Caco-2 (cell line): ENCODE measurements at regions of chr20 and their contacts with region 1.

Region 1: DNA sequence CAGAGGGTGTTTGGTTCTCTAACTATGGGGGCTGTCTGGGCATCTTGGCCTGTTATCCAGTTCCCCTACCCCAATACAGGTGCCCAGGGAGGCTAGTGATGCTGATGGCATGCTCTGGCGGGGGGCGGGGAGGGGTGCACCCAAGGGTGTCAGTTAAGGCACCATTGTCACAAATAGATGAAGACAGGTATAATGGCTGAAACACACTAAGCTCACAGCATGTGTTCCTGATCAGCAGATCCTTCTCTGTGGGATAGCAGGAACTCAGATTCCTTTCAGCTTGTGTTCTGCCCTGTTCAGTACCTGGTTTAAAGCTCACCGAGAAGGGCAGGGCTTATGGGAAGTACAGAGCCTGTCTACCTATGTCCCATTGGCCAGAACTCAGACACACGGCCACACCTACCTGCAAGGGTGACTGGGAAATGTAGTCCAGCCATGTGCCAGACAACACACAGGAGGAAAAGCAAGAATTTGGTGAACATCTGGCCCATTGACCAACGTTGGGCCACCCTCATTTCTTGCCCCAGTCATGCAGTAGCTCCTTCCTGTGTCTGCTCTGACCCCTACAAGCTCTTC is 3.4 kb upstream of the RSPO4 start:
- DNase-seq: peak; percentile 64 to 79
- H3K4me3 ChIP-seq: no peak overlapping the region
- H3K4me3 Mint-ChIP-seq: no peak overlapping the region
- H3K27ac Mint-ChIP-seq: no peak overlapping the region
- H3K4me1 ChIP-seq: peaks cover 5% of the 10 kb centered on the region; the same call in 1 of the 2 replicates
- H3K4me1 Mint-ChIP-seq: peaks cover 16% of the 10 kb centered on the region
- H3K27me3 ChIP-seq: peaks cover 4% of the 10 kb centered on the region
- H3K27me3 Mint-ChIP-seq: peaks cover 19% of the 10 kb centered on the region
- CTCF ChIP-seq: no peak

Region 2: DNA sequence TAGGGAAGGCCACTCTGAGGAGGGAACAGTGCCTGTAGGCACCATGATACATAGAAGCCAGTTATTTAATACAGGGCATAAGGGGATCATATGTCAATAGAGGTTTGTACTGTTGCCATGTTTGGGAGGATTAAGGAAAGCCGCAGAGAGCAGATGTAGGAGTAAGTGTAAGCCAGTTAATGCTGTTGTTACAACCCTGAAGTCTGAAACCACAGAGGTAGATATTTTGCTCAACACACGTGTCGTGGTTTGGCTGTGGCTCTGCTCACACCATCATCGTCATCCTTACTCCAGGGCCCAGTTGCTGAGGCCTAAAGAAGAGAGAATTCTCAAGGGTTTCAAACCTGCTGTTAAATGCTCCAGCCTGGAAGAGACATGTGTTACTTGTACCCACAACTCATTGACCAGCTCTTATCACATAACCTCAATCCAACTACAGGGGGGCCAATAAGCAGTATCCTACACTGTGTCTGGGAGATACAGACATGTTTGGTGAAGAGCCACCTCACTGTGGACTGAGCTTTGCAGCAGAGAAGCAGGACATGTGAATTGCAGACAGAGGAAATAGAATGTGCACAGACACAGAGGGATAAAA is 81.9 kb after region 1 on chr20:
- CTCF ChIA-PET with region 1: no interaction called
- POLR2A ChIA-PET with region 1: no interaction called
- intact Hi-C with region 1: no loop called
- DNase-seq: no peak
- H3K4me3 ChIP-seq: no peak overlapping the region
- H3K4me3 Mint-ChIP-seq: no peak overlapping the region
- H3K27ac Mint-ChIP-seq: no peak overlapping the region
- H3K4me1 ChIP-seq: no peaks in the 10 kb centered on the region
- H3K4me1 Mint-ChIP-seq: no peaks in the 10 kb centered on the region
- H3K27me3 ChIP-seq: no peaks in the 10 kb centered on the region; the same call in 1 of the 2 replicates
- H3K27me3 Mint-ChIP-seq: no peaks in the 10 kb centered on the region
- CTCF ChIP-seq: no peak

Region 3: GRCh38 chr20:1108437-1108920 is 102.9 kb after region 1 on chr20:
- CTCF ChIA-PET with region 1: no interaction called
- POLR2A ChIA-PET with region 1: no interaction called
- intact Hi-C with region 1: loop called (anchors 10 kb)
- DNase-seq: peak; percentile 59 to 68
- H3K4me3 ChIP-seq: no peak overlapping the region
- H3K4me3 Mint-ChIP-seq: no peak overlapping the region
- H3K27ac Mint-ChIP-seq: no peak overlapping the region
- H3K4me1 ChIP-seq: no peaks in the 10 kb centered on the region
- H3K4me1 Mint-ChIP-seq: no peaks in the 10 kb centered on the region
- H3K27me3 ChIP-seq: no peaks in the 10 kb centered on the region
- H3K27me3 Mint-ChIP-seq: peaks cover 11% of the 10 kb centered on the region
- CTCF ChIP-seq: peak; percentile 86

Region 4: GRCh38 chr20:1357921-1358671 is 352.6 kb after region 1 on chr20:
- CTCF ChIA-PET with region 1: no interaction called
- POLR2A ChIA-PET with region 1: no interaction called
- intact Hi-C with region 1: no loop called
- DNase-seq: no peak
- H3K4me3 ChIP-seq: no peak overlapping the region
- H3K4me3 Mint-ChIP-seq: no peak overlapping the region
- H3K27ac Mint-ChIP-seq: no peak overlapping the region
- H3K4me1 ChIP-seq: no peaks in the 10 kb centered on the region
- H3K4me1 Mint-ChIP-seq: no peaks in the 10 kb centered on the region
- H3K27me3 ChIP-seq: no peaks in the 10 kb centered on the region
- H3K27me3 Mint-ChIP-seq: no peaks in the 10 kb centered on the region
- CTCF ChIP-seq: no peak